ENCODE measurements at regions of chr18 and their contacts with region 1.

Region 1: GRCh38 chr18:3771121-3771971 is 321.4 kb downstream of the TGIF1 start:
- DNase-seq: peak; percentile 82 to 91 (median 84)
- ATAC-seq: peak; percentile 97 to 100 (median 100)
- H3K4me3 ChIP-seq: peak overlapping the region in 11 of 12 donors; percentile 1 to 53 (median 43)
- H3K27ac ChIP-seq: peak overlapping the region in 9 of 12 donors; percentile 18 to 70 (median 59)
- H3K4me1 ChIP-seq: peaks cover 0 to 9% (median 2%) of the 10 kb centered on the region in 12 donors
- H3K27me3 ChIP-seq: no peaks in the 10 kb centered on the region
- CTCF ChIP-seq: peak; percentile 93 to 99 (median 96)
- POLR2A ChIP-seq: no peak

Region 2: GRCh38 chr18:3665780-3666525 is 105.4 kb before region 1 on chr18:
- intact Hi-C with region 1: no loop called
- DNase-seq: peak; percentile 73 to 86 (median 78)
- ATAC-seq: peak; percentile 76 to 94 (median 90)
- H3K4me3 ChIP-seq: peak overlapping the region in 10 of 12 donors; percentile 20 to 43 (median 33)
- H3K27ac ChIP-seq: peak overlapping the region in 9 of 12 donors; percentile 8 to 68 (median 53)
- H3K4me1 ChIP-seq: peaks cover 0 to 27% (median 3%) of the 10 kb centered on the region in 12 donors
- H3K27me3 ChIP-seq: no peaks in the 10 kb centered on the region
- CTCF ChIP-seq: peak; percentile 87 to 98 (median 91)
- POLR2A ChIP-seq: no peak

Region 3: DNA sequence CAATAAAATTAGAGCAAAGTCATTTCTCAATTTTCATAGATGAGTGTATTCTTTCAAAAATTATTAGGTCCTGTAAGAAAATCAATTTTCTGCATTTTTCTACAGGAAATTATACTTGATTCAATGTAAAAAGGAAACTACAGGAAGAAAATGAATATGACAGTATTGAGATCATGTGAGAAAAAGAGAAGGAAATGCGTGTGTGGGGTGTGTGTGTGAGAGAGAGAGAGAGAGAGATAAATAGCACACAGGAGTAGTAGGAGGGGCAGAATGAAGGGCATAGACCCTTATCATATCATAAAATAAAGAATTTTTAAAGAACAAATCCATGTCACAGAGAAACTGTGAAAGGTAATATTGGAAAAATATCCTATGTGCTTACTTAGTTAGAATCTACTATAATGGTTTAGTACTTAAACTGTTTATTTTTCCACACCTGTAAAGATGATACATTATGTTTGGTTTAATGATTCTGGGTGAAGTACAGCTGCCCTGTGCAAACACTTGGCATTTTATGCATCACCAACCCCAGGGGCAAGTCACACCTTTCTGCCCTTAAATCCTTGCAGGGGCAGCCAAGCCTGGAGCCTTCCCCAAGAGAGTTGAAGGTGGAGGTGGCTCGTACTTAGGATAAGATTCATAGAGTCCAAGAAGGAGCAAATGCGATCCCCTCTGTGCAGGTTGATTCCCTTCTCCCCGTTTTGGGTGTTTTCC is 45.0 kb before region 1 on chr18:
- intact Hi-C with region 1: no loop called
- DNase-seq: no peak
- ATAC-seq: peak in 1 of 4 donors; percentile 61
- H3K4me3 ChIP-seq: no peak overlapping the region
- H3K27ac ChIP-seq: peak overlapping the region in 1 of 12 donors; percentile 80
- H3K4me1 ChIP-seq: peaks cover 0 to 38% (median 0%) of the 10 kb centered on the region in 12 donors
- H3K27me3 ChIP-seq: no peaks in the 10 kb centered on the region
- CTCF ChIP-seq: no peak
- POLR2A ChIP-seq: no peak

Region 4: DNA sequence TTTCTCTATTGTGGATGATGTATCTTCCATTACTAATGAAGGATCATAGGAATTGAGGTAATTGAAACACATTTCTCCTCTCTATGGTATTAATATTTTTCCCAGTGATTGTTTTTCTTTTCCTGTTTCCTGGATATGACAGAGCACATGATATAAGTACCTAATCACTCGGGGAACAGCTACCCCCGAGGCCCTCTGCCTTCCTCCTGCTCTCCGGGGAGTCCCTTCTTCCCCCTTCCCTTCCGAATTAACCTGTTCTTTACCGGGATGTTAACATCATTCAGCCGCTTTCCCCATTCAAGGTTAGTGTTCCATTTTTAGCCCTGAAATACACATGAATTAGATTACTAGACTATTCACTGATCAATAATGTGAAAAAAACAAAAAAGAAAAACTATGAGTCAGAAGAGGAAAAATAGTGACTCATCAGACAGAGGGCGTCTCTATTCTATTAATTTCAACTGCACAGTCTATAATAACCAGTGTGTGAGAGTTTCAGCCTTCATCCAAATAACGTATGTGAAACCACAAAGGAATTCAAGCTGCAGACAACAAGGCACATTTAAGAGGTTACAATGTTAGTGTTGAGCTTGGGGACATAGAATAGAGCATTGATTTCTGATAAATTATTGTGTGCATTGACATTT is 233.0 kb after region 1 on chr18:
- intact Hi-C with region 1: loop called in 3 of 10 experiments (anchors 2 to 5 kb)
- DNase-seq: no peak
- ATAC-seq: no peak
- H3K4me3 ChIP-seq: no peak overlapping the region
- H3K27ac ChIP-seq: no peak overlapping the region
- H3K4me1 ChIP-seq: no peaks in the 10 kb centered on the region
- H3K27me3 ChIP-seq: no peaks in the 10 kb centered on the region
- CTCF ChIP-seq: no peak
- POLR2A ChIP-seq: no peak

Region 5: GRCh38 chr18:4074647-4075046 is 303.3 kb after region 1 on chr18:
- intact Hi-C with region 1: loop called in 8 of 10 experiments (anchors 2 to 10 kb)
- DNase-seq: no peak
- ATAC-seq: no peak
- H3K4me3 ChIP-seq: no peak overlapping the region
- H3K27ac ChIP-seq: no peak overlapping the region
- H3K4me1 ChIP-seq: no peaks in the 10 kb centered on the region
- H3K27me3 ChIP-seq: no peaks in the 10 kb centered on the region
- CTCF ChIP-seq: no peak
- POLR2A ChIP-seq: no peak

Measured in heart left ventricle (tissue), 16 donors.